Adrenal gland (tissue), 19 donors: ENCODE measurements at regions of chr5 and their contacts with region 1.

Region 1: DNA sequence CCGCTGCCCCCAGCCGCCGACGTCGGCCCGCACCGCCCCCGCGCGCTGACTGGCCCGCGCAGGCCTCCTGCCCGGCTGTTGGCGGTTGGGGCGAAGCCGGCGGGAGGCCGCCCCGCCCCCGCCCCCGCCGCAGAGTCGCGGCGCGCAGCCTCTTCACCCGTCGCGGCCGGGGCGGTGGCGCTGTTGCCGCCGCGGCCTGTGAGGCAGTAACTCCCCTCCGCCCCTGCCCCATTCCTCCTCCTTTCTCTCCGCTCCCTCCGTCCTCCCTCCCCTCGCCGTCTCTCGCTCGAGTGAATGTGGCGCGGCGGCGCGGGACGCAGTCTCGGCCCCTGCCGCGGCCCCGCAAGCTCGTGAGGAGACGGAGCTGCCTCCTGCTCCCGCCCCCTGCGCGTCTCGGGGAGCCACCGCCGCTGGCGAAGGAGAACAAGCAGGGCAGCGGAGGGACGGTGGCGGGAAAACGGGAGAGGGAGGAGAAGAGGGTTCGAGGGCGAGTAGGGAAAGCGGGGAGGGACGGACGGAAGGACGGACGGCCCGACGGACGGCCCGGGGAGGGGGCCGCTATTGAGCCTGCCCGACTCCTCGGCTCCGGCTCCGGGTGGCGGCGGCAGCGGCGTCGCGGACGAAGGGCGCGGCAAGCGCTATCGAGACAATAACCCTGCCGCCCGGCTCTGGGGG is 637 bp upstream of the ERBIN start:
- DNase-seq: peak; percentile 83 to 90 (median 85)
- H3K4me3 ChIP-seq: peak overlapping the region; percentile 73 to 97 (median 94)
- H3K27ac ChIP-seq: peak overlapping the region; percentile 99 to 100 (median 100)
- H3K4me1 ChIP-seq: peaks cover 6 to 16% of the 10 kb centered on the region in 2 donors
- H3K27me3 ChIP-seq: no peaks in the 10 kb centered on the region
- CTCF ChIP-seq: peak in 4 of 6 experiments; percentile 20 to 60 (median 43)
- POLR2A ChIP-seq: peak; percentile 89 to 95

Region 2: GRCh38 chr5:66010476-66010875 is 84.7 kb after region 1 on chr5:
- intact Hi-C with region 1: loop called in 1 of 2 experiments (anchors 10 kb)
- DNase-seq: no peak
- H3K4me3 ChIP-seq: no peak overlapping the region
- H3K27ac ChIP-seq: no peak overlapping the region
- H3K4me1 ChIP-seq: peaks cover 0 to 11% of the 10 kb centered on the region in 2 donors
- H3K27me3 ChIP-seq: no peaks in the 10 kb centered on the region
- CTCF ChIP-seq: no peak
- POLR2A ChIP-seq: no peak

Region 3: GRCh38 chr5:66144074-66144833 is 218.5 kb after region 1 on chr5 and contains the start of gene SREK1:
- intact Hi-C with region 1: loop called in 1 of 2 experiments (anchors 10 kb)
- DNase-seq: peak; percentile 91 to 96 (median 94)
- H3K4me3 ChIP-seq: peak within 1 kb of the TSS; percentile 76 to 87 (median 78)
- H3K27ac ChIP-seq: peak within 1 kb of the TSS; percentile 88 to 100 (median 98)
- H3K4me1 ChIP-seq: peaks cover 11 to 36% of the 10 kb centered on the region in 2 donors
- H3K27me3 ChIP-seq: no peaks in the 10 kb centered on the region
- CTCF ChIP-seq: no peak
- POLR2A ChIP-seq: peak; percentile 94 to 97
- total RNA-seq, gene SREK1: 14.3 to 126 (median 51.1) TPM

Region 4: GRCh38 chr5:67118050-67118620 is 1192.4 kb after region 1 on chr5:
- intact Hi-C with region 1: no loop called
- DNase-seq: no peak
- H3K4me3 ChIP-seq: no peak overlapping the region
- H3K27ac ChIP-seq: no peak overlapping the region
- H3K4me1 ChIP-seq: peaks cover 0 to 12% of the 10 kb centered on the region in 2 donors
- H3K27me3 ChIP-seq: no peaks in the 10 kb centered on the region
- CTCF ChIP-seq: no peak
- POLR2A ChIP-seq: no peak